ENCODE measurements at regions of chr2 and their contacts with region 1.

Region 1: DNA sequence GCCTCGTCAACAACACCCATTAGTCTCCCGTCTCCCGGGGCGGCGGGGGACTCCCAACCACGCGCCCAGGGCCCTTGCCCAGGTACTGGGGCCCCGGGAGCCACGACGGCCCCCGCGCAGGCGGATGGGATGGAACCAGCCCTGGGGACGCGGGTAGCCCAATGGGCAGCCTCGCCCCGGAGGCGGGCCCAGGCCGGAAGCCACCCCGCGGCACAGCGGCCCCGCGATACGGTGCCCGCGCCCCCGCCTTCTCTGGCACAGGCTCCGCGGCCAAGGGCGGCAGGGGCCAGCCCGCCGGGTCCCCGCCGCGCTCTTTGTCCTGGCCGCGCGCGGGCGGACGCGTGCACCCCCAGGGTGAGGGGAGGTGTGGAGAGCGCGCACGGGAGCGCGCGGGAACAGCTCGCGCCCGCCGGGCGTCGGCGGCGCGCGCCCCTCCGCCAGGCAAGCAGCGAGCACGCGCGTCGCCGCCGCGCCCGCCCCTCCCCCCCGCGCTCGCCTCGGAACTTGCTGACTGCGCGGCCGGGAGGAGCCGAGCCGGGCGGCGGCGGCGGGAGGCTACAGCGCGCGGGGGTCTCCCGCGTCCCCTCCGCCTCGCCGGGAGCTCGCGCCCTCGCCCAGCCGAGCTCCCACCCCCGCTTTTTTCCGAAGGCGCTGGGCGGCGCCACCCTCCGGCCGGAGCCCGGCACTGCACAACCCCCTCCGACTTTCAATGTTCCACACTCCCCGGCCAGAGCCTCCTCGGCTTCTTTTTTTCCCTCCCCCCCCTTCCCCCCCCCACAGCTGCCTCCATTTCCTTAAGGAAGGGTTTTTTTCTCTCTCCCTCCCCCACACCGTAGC is at the start of gene UBE2E3:
- DNase-seq: peak; percentile 79 to 87
- ATAC-seq: peak; percentile 74 to 90 (median 79)
- H3K4me3 ChIP-seq: peak within 1 kb of the TSS; percentile 66
- H3K4me3 Mint-ChIP-seq: peak within 1 kb of the TSS; percentile 100
- H3K27ac ChIP-seq: peak within 1 kb of the TSS; percentile 48
- H3K27ac Mint-ChIP-seq: peak within 1 kb of the TSS; percentile 95
- H3K4me1 ChIP-seq: peaks cover 14% of the 10 kb centered on the region
- H3K4me1 Mint-ChIP-seq: peaks cover 34 to 36% of the 10 kb centered on the region in 2 donors
- H3K27me3 ChIP-seq: no peaks in the 10 kb centered on the region
- H3K27me3 Mint-ChIP-seq: peaks cover 0 to 9% of the 10 kb centered on the region in 2 donors
- CTCF ChIP-seq: peak; percentile 61
- total RNA-seq, gene UBE2E3: 48.5 to 59.3 (median 52.6) TPM

Region 2: GRCh38 chr2:180006781-180007579 is 973.3 kb before region 1 on chr2 and contains the start of gene CWC22:
- intact Hi-C with region 1: loop called (anchors 2 kb)
- DNase-seq: peak; percentile 77 to 96
- ATAC-seq: peak; percentile 93 to 96 (median 93)
- H3K4me3 ChIP-seq: peak within 1 kb of the TSS; percentile 93
- H3K4me3 Mint-ChIP-seq: peak within 1 kb of the TSS; percentile 99
- H3K27ac ChIP-seq: peak within 1 kb of the TSS; percentile 91
- H3K27ac Mint-ChIP-seq: peak within 1 kb of the TSS; percentile 100
- H3K4me1 ChIP-seq: peaks cover 7% of the 10 kb centered on the region
- H3K4me1 Mint-ChIP-seq: peaks cover 41 to 45% of the 10 kb centered on the region in 2 donors
- H3K27me3 ChIP-seq: no peaks in the 10 kb centered on the region
- H3K27me3 Mint-ChIP-seq: no peaks in the 10 kb centered on the region
- CTCF ChIP-seq: no peak
- total RNA-seq, gene CWC22: 14.9 to 20.3 (median 16.1) TPM

Region 3: GRCh38 chr2:181036848-181037603 is 56.7 kb after region 1 on chr2:
- intact Hi-C with region 1: loop called (anchors 10 kb)
- DNase-seq: no peak
- ATAC-seq: peak; percentile 78 to 84 (median 82)
- H3K4me3 ChIP-seq: no peak overlapping the region
- H3K4me3 Mint-ChIP-seq: no peak overlapping the region
- H3K27ac ChIP-seq: no peak overlapping the region
- H3K27ac Mint-ChIP-seq: peak overlapping the region; percentile 70 to 85
- H3K4me1 ChIP-seq: peaks cover 3% of the 10 kb centered on the region
- H3K4me1 Mint-ChIP-seq: peaks cover 33 to 34% of the 10 kb centered on the region in 2 donors
- H3K27me3 ChIP-seq: no peaks in the 10 kb centered on the region
- H3K27me3 Mint-ChIP-seq: no peaks in the 10 kb centered on the region
- CTCF ChIP-seq: no peak

Region 4: DNA sequence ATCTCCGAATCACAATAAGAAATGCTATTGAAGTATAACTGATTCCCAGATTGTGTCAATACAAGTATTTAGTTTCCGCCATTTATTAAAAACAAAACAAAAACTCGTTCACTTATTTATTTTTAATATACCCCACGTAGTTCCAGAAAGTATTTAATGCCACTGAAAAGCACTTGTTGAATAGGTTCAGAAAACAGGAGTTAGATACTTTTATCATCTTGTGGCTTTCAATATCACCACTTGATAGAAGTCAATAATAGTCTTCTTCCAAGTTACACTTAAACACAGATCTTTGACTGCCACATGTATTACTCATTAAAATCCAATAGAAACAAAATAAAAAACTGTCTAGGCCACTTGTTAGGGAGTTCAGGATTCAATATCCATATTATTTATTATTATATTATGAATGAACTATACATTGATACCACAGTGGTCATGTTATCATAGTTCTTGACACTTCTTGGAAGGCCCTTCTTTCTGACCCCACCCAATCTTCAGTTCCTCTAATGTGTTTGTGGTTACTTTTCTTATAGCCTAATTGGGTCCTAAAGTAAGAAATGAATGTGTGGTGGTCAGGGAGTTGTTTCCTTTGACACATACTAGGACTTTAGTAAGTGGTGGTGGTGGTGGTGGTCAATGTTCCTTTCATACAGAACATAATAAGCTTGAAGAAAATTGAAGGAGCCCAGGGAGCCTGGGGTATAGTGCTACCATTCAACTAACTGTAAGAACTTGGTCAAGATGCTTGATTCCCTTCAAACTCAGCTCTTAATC is 255.5 kb after region 1 on chr2:
- intact Hi-C with region 1: no loop called
- DNase-seq: no peak
- ATAC-seq: peak; percentile 30 to 55 (median 34)
- H3K4me3 ChIP-seq: no peak overlapping the region
- H3K4me3 Mint-ChIP-seq: peak overlapping the region; percentile 51
- H3K27ac ChIP-seq: no peak overlapping the region
- H3K27ac Mint-ChIP-seq: peak overlapping the region; percentile 69 to 76
- H3K4me1 ChIP-seq: no peaks in the 10 kb centered on the region
- H3K4me1 Mint-ChIP-seq: peaks cover 48 to 53% of the 10 kb centered on the region in 2 donors
- H3K27me3 ChIP-seq: no peaks in the 10 kb centered on the region
- H3K27me3 Mint-ChIP-seq: no peaks in the 10 kb centered on the region
- CTCF ChIP-seq: no peak

Region 5: GRCh38 chr2:181312515-181312927 is 332.2 kb after region 1 on chr2:
- intact Hi-C with region 1: loop called (anchors 5 kb)
- DNase-seq: peak; percentile 41 to 69
- ATAC-seq: peak; percentile 68 to 80 (median 77)
- H3K4me3 ChIP-seq: no peak overlapping the region
- H3K4me3 Mint-ChIP-seq: peak overlapping the region; percentile 82
- H3K27ac ChIP-seq: peak overlapping the region; percentile 84
- H3K27ac Mint-ChIP-seq: peak overlapping the region; percentile 88 to 89
- H3K4me1 ChIP-seq: peaks cover 21% of the 10 kb centered on the region
- H3K4me1 Mint-ChIP-seq: peaks cover 45 to 53% of the 10 kb centered on the region in 2 donors
- H3K27me3 ChIP-seq: no peaks in the 10 kb centered on the region
- H3K27me3 Mint-ChIP-seq: no peaks in the 10 kb centered on the region
- CTCF ChIP-seq: no peak

Region 6: GRCh38 chr2:181393472-181393871 is 413.1 kb after region 1 on chr2:
- intact Hi-C with region 1: loop called (anchors 5 kb)
- DNase-seq: peak in 1 of 2 donors; percentile 66
- ATAC-seq: peak; percentile 57 to 79 (median 65)
- H3K4me3 ChIP-seq: peak overlapping the region; percentile 53
- H3K4me3 Mint-ChIP-seq: peak overlapping the region; percentile 95
- H3K27ac ChIP-seq: peak overlapping the region; percentile 99
- H3K27ac Mint-ChIP-seq: peak overlapping the region; percentile 92 to 98
- H3K4me1 ChIP-seq: peaks cover 8% of the 10 kb centered on the region
- H3K4me1 Mint-ChIP-seq: peaks cover 21 to 27% of the 10 kb centered on the region in 2 donors
- H3K27me3 ChIP-seq: no peaks in the 10 kb centered on the region
- H3K27me3 Mint-ChIP-seq: no peaks in the 10 kb centered on the region
- CTCF ChIP-seq: no peak

Region 7: GRCh38 chr2:181466661-181467576 is 486.6 kb after region 1 on chr2:
- intact Hi-C with region 1: loop called (anchors 5 kb)
- DNase-seq: peak; percentile 70 to 91
- ATAC-seq: peak; percentile 46 to 61 (median 60)
- H3K4me3 ChIP-seq: no peak overlapping the region
- H3K4me3 Mint-ChIP-seq: peak overlapping the region; percentile 43
- H3K27ac ChIP-seq: peak overlapping the region; percentile 50
- H3K27ac Mint-ChIP-seq: peak overlapping the region; percentile 79 to 84
- H3K4me1 ChIP-seq: peaks cover 19% of the 10 kb centered on the region
- H3K4me1 Mint-ChIP-seq: peaks cover 78 to 80% of the 10 kb centered on the region in 2 donors
- H3K27me3 ChIP-seq: no peaks in the 10 kb centered on the region
- H3K27me3 Mint-ChIP-seq: no peaks in the 10 kb centered on the region
- CTCF ChIP-seq: peak; percentile 84

Region 8: DNA sequence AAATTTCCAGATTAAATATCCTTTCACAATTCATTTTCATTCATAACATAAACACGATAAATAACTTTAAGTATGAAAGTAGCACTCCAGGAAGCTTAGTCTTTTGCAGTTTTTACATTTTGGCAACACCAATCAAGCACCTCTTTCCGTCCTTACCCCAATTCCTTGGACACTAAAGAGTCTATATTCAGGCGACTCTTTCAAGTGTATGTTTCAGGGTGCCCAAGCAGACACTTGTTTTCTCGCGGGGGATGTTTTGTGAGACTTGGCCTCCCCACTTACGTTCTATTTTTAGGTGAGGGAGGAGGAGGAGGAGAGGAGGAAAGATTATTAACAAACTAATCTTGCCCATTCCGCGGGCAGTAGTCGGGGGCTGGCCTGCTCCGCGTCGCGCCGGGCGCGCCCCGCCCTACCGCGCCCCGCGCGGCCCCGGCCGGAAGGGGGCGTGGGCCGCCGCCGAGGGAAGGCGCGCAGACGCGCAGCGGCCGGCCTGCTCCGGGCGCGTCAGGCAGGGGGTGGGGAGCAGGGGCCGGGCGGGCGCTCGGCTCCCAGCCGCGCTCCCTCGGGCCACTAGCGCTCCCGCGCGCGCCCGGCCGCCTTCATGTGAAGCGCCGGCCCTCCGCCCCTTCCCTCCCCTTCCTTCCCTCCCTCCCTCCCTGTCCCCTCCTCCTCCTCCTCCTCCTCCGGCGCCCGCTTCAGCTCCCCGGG is 911.1 kb after region 1 on chr2 and contains the start of gene ITPRID2:
- intact Hi-C with region 1: loop called (anchors 10 kb)
- DNase-seq: peak; percentile 62 to 83
- ATAC-seq: peak; percentile 95 to 98 (median 95)
- H3K4me3 ChIP-seq: peak within 1 kb of the TSS; percentile 91
- H3K4me3 Mint-ChIP-seq: peak within 1 kb of the TSS; percentile 97
- H3K27ac ChIP-seq: peak within 1 kb of the TSS; percentile 77
- H3K27ac Mint-ChIP-seq: peak within 1 kb of the TSS; percentile 76 to 97
- H3K4me1 ChIP-seq: peaks cover 6% of the 10 kb centered on the region
- H3K4me1 Mint-ChIP-seq: peaks cover 28 to 29% of the 10 kb centered on the region in 2 donors
- H3K27me3 ChIP-seq: peaks cover 9% of the 10 kb centered on the region
- H3K27me3 Mint-ChIP-seq: peaks cover 14 to 22% of the 10 kb centered on the region in 2 donors
- CTCF ChIP-seq: no peak
- total RNA-seq, gene ITPRID2: 63.7 to 89.6 (median 65.8) TPM

Measured in natural killer cell (primary cell).